Activated T-helper 1 cell treated with anti-CD3 and anti-CD28 coated beads, Interleukin-12 subunit alpha, Interleukin-12 subunit beta, Interleukin-2, Interleukin-4 antibody, amounts not matched to agents 30 ng/mL and 10 ng/mL and 1 ng/mL, durations not matched to agents 14 hours and 24 hours and 36 hours (primary cell): ENCODE measurements at regions of chr2 and their contacts with region 1.

Region 1: DNA sequence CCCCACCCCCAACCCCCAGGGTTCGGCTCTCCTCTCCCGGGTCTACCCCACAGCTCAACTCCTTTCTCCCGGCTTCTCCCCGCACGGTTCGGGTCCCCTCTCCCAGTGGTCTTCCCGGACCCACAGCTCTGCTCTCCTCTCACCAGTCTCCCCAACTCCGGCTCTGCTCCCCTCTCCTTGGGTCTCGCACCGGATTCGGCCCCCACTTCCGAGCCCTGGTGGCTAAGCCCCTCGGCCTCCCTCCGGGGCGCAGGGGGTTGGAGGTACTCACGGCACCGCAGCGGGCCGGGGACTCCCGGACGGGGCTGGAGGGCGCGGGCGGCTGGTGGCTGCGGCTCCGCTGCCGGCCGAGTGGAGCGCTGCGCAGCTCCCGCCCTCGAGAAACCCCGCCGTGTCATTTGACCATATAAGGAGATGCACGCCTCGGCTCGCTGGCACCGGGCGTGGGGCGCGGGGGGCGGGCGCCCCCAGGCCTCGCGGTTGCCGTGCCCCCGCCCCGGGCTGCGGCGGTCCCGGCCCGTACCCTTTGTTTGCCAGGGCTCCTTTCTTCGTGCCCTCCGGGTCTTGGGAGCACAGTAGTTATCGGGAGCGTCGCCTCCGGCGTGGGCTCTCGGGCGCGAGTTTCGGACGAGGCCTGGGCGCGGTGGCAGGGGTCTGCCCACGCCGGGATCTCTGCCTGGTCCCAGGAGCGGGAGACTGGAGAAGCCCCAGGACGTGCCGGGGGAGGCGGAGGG is at the start of gene FHL2:
- DNase-seq: peak; percentile 65
- H3K4me3 Mint-ChIP-seq: peak within 1 kb of the TSS; percentile 82
- H3K27ac Mint-ChIP-seq: peak within 1 kb of the TSS; percentile 54
- H3K4me1 Mint-ChIP-seq: peaks cover 4% of the 10 kb centered on the region
- H3K27me3 Mint-ChIP-seq: peaks cover 39% of the 10 kb centered on the region
- total RNA-seq, gene FHL2: 2.3 and 2.6 TPM in 2 replicates

Region 2: GRCh38 chr2:105329561-105330495 is 69.0 kb before region 1 on chr2 and contains the start of gene TGFBRAP1:
- intact Hi-C with region 1: loop called (anchors 2 kb)
- DNase-seq: peak; percentile 56
- H3K4me3 Mint-ChIP-seq: peak within 1 kb of the TSS; percentile 90
- H3K27ac Mint-ChIP-seq: peak within 1 kb of the TSS; percentile 91
- H3K4me1 Mint-ChIP-seq: peaks cover 31% of the 10 kb centered on the region
- H3K27me3 Mint-ChIP-seq: no peaks in the 10 kb centered on the region
- total RNA-seq, gene TGFBRAP1: 23.1 and 27.3 TPM in 2 replicates

Region 3: DNA sequence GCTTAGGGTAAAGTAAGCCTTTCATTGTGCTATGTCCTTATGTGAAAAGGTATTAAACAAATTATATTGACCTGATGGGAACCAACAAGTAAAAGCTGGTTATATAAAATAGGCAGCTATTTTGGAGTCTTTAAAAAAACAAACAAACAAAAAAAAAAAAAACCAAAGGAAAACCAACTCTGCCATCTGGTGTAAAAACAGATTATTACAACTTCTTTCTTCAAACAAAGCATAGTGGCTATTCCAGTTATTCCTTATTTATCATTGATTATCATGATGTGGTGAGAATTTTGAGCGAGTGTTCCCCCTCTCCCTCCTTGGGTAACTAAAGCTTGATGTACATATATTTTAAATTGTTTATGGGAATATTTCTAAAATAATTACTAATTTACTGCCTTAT is 122.3 kb after region 1 on chr2:
- intact Hi-C with region 1: loop called (anchors 1 kb)
- DNase-seq: no peak
- H3K4me3 Mint-ChIP-seq: no peak overlapping the region
- H3K27ac Mint-ChIP-seq: no peak overlapping the region
- H3K4me1 Mint-ChIP-seq: no peaks in the 10 kb centered on the region
- H3K27me3 Mint-ChIP-seq: peaks cover 2% of the 10 kb centered on the region